Heart right ventricle (tissue), 16 donors: ENCODE measurements at regions of chrX and their contacts with region 1.

Region 1: GRCh38 chrX:97026406-97026805 is 142.7 kb downstream of the RPA4 start:
- DNase-seq: no peak
- ATAC-seq: no peak
- H3K4me3 ChIP-seq: no peak overlapping the region
- H3K27ac ChIP-seq: no peak overlapping the region
- H3K4me1 ChIP-seq: no peaks in the 10 kb centered on the region
- H3K27me3 ChIP-seq: peaks cover 0 to 4% (median 0%) of the 10 kb centered on the region in 7 donors
- CTCF ChIP-seq: peak in 4 of 9 donors; percentile 9 to 18 (median 16)

Region 2: GRCh38 chrX:97096385-97096784 is 70.0 kb after region 1 on chrX:
- intact Hi-C with region 1: no loop called
- DNase-seq: no peak
- ATAC-seq: no peak
- H3K4me3 ChIP-seq: no peak overlapping the region
- H3K27ac ChIP-seq: no peak overlapping the region
- H3K4me1 ChIP-seq: no peaks in the 10 kb centered on the region
- H3K27me3 ChIP-seq: no peaks in the 10 kb centered on the region
- CTCF ChIP-seq: no peak

Region 3: GRCh38 chrX:97685753-97686152 is 659.3 kb after region 1 on chrX:
- intact Hi-C with region 1: loop called in 1 of 10 experiments (anchors 10 kb)
- DNase-seq: no peak
- ATAC-seq: no peak
- H3K4me3 ChIP-seq: no peak overlapping the region
- H3K27ac ChIP-seq: no peak overlapping the region
- H3K4me1 ChIP-seq: no peaks in the 10 kb centered on the region
- H3K27me3 ChIP-seq: peaks cover 0 to 29% (median 0%) of the 10 kb centered on the region in 7 donors
- CTCF ChIP-seq: peak in 7 of 9 donors; percentile 40 to 67 (median 47)